ENCODE measurements at regions of chr1 and their contacts with region 1.

Region 1: GRCh38 chr1:155001675-155002463 is 733 bp upstream of the ZBTB7B start:
- DNase-seq: peak; percentile 98
- H3K4me3 Mint-ChIP-seq: peak overlapping the region; percentile 98
- H3K27ac Mint-ChIP-seq: peak overlapping the region; percentile 97
- H3K4me1 Mint-ChIP-seq: peaks cover 55% of the 10 kb centered on the region
- H3K27me3 Mint-ChIP-seq: peaks cover 2% of the 10 kb centered on the region

Region 2: GRCh38 chr1:154404984-154405761 is 596.7 kb before region 1 on chr1 and contains the start of gene IL6R:
- intact Hi-C with region 1: loop called (anchors 5 kb)
- DNase-seq: peak; percentile 62
- H3K4me3 Mint-ChIP-seq: peak within 1 kb of the TSS; percentile 86
- H3K27ac Mint-ChIP-seq: peak within 1 kb of the TSS; percentile 77
- H3K4me1 Mint-ChIP-seq: peaks cover 73% of the 10 kb centered on the region
- H3K27me3 Mint-ChIP-seq: no peaks in the 10 kb centered on the region
- total RNA-seq, gene IL6R: 4.9 and 5.0 TPM in 2 replicates

Region 3: DNA sequence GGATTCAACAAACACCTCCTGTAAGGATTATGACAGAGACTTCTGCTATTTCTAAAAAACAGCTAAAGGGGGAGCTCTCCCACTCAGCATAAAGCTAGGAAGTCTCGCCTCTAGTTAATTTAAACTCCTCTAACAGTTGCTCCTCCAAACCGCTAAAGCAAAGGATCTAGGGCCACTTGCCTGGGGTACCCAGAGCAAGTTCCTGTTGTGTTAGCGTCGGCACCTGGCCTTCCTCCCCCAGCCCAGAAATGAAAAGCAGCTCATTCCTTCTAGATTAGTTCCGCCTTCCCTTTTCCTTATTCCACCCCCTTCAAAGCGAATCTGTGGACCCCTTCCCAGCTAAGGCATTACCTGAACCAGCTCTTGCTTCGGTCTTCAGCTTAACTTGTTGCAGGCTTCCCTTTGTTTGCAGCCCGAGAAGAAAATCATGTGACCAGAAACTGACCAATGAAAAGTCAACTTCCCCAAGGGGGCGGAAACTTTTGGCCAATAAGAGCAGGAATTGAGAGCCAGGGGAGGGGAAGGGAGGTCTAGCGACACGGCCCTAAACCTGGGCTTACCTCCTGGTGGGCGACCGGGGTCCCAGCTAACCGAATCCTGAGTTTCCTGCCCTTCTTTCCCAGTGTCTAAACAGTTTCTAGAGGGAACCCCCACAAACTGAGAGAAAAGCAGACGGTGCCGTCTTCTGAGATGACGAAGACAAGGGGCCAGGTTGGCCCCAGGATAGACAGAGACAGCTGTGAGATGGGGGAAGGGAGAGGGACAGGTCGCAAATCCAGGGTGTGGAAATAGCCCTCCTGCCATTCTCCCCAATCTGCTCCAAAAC is 45.9 kb before region 1 on chr1 and contains the start of gene PBXIP1:
- intact Hi-C with region 1: loop called (anchors 1 kb)
- DNase-seq: peak; percentile 86
- H3K4me3 Mint-ChIP-seq: peak within 1 kb of the TSS; percentile 94
- H3K27ac Mint-ChIP-seq: peak within 1 kb of the TSS; percentile 100
- H3K4me1 Mint-ChIP-seq: peaks cover 65% of the 10 kb centered on the region
- H3K27me3 Mint-ChIP-seq: peaks cover 2% of the 10 kb centered on the region
- total RNA-seq, gene PBXIP1: 25.1 and 27.9 TPM in 2 replicates

Region 4: DNA sequence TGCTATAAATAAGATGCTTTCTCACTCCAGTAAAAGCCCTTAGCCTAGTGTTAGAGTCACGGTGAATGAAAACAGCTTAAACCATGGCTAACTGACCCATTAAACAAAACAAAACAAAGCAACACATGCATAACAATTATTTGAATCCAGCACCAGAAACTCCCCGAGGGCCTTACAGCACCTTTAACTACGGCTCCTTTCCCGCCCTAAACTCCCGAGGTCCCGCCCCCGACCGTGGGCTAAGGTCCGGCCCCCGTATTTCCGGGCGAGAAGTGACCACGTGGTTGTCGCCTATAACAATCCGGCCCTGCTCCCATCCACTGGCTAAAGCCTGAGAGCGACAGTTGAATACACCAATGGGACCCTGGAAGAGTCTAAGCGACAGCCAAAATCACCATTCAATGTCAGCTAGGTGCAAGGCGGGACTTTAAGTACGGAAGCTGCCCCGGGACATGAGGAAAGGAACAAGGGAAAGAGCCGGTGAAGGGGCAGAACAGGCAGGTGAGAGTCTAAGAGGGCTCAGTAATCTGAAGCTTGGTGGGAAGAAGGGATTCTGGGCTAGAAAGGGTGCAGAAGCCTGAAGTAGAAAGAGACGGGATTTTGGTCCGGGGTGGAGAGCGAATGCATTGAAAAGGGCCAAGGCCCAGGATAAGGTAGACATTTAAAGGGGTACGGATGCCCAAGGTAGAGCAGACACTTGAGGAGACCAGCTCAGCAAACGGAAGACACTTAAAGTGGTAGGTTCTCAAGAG is 18.8 kb before region 1 on chr1 and contains the start of gene FLAD1:
- intact Hi-C with region 1: loop called (anchors 1 kb)
- DNase-seq: peak; percentile 96
- H3K4me3 Mint-ChIP-seq: no peak within 1 kb of the TSS
- H3K27ac Mint-ChIP-seq: peak within 1 kb of the TSS; percentile 42
- H3K4me1 Mint-ChIP-seq: peaks cover 8% of the 10 kb centered on the region
- H3K27me3 Mint-ChIP-seq: no peaks in the 10 kb centered on the region
- total RNA-seq, gene FLAD1: 69.2 and 74.3 TPM in 2 replicates

Region 5: GRCh38 chr1:155050560-155051341 is 48.9 kb after region 1 on chr1 and contains the start of gene ADAM15:
- intact Hi-C with region 1: loop called (anchors 1 kb)
- DNase-seq: peak; percentile 79
- H3K4me3 Mint-ChIP-seq: peak within 1 kb of the TSS; percentile 88
- H3K27ac Mint-ChIP-seq: peak within 1 kb of the TSS; percentile 88
- H3K4me1 Mint-ChIP-seq: peaks cover 28% of the 10 kb centered on the region
- H3K27me3 Mint-ChIP-seq: no peaks in the 10 kb centered on the region
- total RNA-seq, gene ADAM15: 82.9 and 86.8 TPM in 2 replicates

Region 6: DNA sequence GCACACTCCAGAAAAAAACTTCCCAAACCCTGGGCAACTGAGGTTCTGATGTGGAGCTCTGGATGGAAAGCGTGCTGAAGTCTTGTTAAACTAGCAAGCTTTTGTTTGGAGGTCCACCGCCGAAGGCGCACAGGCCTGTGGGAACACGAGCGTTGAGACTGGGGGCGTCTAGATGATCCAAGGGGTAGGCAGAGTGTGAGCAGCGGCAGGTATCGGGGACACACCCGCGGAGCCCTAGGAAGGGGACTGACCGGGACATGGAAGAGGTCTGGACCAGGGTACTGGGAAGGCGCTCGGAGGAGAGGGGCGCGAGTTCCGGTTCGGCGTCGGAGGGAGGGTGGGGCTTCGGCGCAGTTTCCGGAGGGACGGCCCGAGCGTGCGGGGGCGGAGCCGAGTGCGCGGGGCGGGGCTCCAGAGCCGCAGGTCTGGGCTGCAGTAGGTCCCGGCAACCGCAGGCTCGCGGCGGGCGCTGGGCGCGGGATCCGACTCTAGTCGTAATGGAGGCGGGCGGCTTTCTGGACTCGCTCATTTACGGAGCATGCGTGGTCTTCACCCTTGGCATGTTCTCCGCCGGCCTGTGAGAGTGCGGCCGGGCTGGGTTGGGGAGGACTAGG is 133.7 kb after region 1 on chr1 and contains the start of gene SLC50A1:
- intact Hi-C with region 1: loop called (anchors 1 kb)
- DNase-seq: peak; percentile 91
- H3K4me3 Mint-ChIP-seq: peak within 1 kb of the TSS; percentile 94
- H3K27ac Mint-ChIP-seq: peak within 1 kb of the TSS; percentile 99
- H3K4me1 Mint-ChIP-seq: peaks cover 42% of the 10 kb centered on the region
- H3K27me3 Mint-ChIP-seq: peaks cover 5% of the 10 kb centered on the region
- total RNA-seq, gene SLC50A1: 45.7 and 47.7 TPM in 2 replicates